Activated CD4-positive, alpha-beta memory T cell treated with anti-CD3 and anti-CD28 coated beads for 36 hours (primary cell): ENCODE measurements at regions of chr7 and their contacts with region 1.

Region 1: GRCh38 chr7:24819916-24820689 is 62.8 kb upstream of the GSDME start:
- DNase-seq: peak; percentile 84
- H3K4me3 Mint-ChIP-seq: peak overlapping the region; percentile 62
- H3K27ac Mint-ChIP-seq: peak overlapping the region; percentile 95
- H3K4me1 Mint-ChIP-seq: peaks cover 33% of the 10 kb centered on the region
- H3K27me3 Mint-ChIP-seq: no peaks in the 10 kb centered on the region

Region 2: GRCh38 chr7:24757353-24758275 is 62.5 kb before region 1 on chr7 and contains the start of gene GSDME:
- CTCF ChIA-PET with region 1: no interaction called
- POLR2A ChIA-PET with region 1: no interaction called
- intact Hi-C with region 1: loop called (anchors 2 kb)
- DNase-seq: peak; percentile 35
- H3K4me3 Mint-ChIP-seq: peak within 1 kb of the TSS; percentile 78
- H3K27ac Mint-ChIP-seq: no peak within 1 kb of the TSS
- H3K4me1 Mint-ChIP-seq: peaks cover 30% of the 10 kb centered on the region
- H3K27me3 Mint-ChIP-seq: peaks cover 45% of the 10 kb centered on the region
- total RNA-seq, gene GSDME: 4.7 TPM

Region 3: GRCh38 chr7:24877790-24878311 is 57.7 kb after region 1 on chr7:
- CTCF ChIA-PET with region 1: interaction called, 12 read pairs
- POLR2A ChIA-PET with region 1: interaction called, 6 read pairs
- intact Hi-C with region 1: loop called (anchors 1 kb)
- DNase-seq: peak; percentile 46
- H3K4me3 Mint-ChIP-seq: peak overlapping the region; percentile 38
- H3K27ac Mint-ChIP-seq: peak overlapping the region; percentile 61
- H3K4me1 Mint-ChIP-seq: peaks cover 55% of the 10 kb centered on the region
- H3K27me3 Mint-ChIP-seq: no peaks in the 10 kb centered on the region

Region 4: GRCh38 chr7:24907311-24907886 is 87.3 kb after region 1 on chr7:
- CTCF ChIA-PET with region 1: interaction called, 16 read pairs
- POLR2A ChIA-PET with region 1: interaction called, 9 read pairs
- intact Hi-C with region 1: loop called (anchors 1 kb)
- DNase-seq: peak; percentile 56
- H3K4me3 Mint-ChIP-seq: no peak overlapping the region
- H3K27ac Mint-ChIP-seq: no peak overlapping the region
- H3K4me1 Mint-ChIP-seq: peaks cover 42% of the 10 kb centered on the region
- H3K27me3 Mint-ChIP-seq: no peaks in the 10 kb centered on the region

Region 5: DNA sequence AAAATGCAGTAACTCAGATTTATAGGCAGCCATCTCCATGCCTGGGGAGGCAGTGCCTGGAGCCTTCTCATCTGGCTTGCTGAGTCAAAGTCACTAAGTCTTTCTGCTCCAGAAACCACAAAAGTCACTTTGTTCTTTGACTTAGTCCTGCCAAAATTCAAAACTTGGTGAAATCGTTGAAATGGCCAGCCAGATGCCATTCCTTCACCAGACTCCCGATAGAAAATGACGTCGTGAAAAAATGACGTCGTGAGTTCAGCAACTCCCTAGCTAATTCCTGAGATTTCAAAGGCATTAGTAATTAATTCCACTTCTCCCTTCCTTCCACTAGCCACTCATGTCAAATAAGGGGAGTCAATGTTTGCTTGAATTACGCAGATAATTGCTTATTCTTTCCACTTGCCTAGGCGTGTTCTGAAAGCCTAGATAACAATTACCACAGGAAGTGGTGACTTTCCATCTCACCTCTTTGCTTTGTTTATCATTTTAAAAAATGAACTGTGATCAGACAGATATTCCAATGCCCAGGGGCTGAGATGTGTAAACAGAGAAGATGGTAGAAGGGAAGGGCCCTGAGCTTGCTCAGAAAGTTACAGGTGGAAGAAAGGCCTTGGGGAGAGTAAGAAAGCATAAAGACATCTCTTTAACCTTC is 208.4 kb after region 1 on chr7:
- CTCF ChIA-PET with region 1: interaction called, 6 read pairs
- POLR2A ChIA-PET with region 1: no interaction called
- intact Hi-C with region 1: loop called (anchors 1 kb)
- DNase-seq: peak; percentile 42
- H3K4me3 Mint-ChIP-seq: peak overlapping the region; percentile 0
- H3K27ac Mint-ChIP-seq: peak overlapping the region; percentile 70
- H3K4me1 Mint-ChIP-seq: peaks cover 48% of the 10 kb centered on the region
- H3K27me3 Mint-ChIP-seq: no peaks in the 10 kb centered on the region

Region 6: GRCh38 chr7:25093268-25093826 is 273.2 kb after region 1 on chr7:
- CTCF ChIA-PET with region 1: interaction called, 251 read pairs
- POLR2A ChIA-PET with region 1: no interaction called
- intact Hi-C with region 1: loop called (anchors 1 kb)
- DNase-seq: peak; percentile 88
- H3K4me3 Mint-ChIP-seq: no peak overlapping the region
- H3K27ac Mint-ChIP-seq: no peak overlapping the region
- H3K4me1 Mint-ChIP-seq: peaks cover 14% of the 10 kb centered on the region
- H3K27me3 Mint-ChIP-seq: peaks cover 2% of the 10 kb centered on the region